Right cardiac atrium (tissue), 5 donors: ENCODE measurements at regions of chr3 and their contacts with region 1.

Region 1: GRCh38 chr3:67377299-67377698 is 277.1 kb downstream of the SUCLG2 start:
- DNase-seq: no peak
- ATAC-seq: no peak
- H3K4me3 ChIP-seq: no peak overlapping the region
- H3K27ac ChIP-seq: no peak overlapping the region
- H3K4me1 ChIP-seq: no peaks in the 10 kb centered on the region
- H3K27me3 ChIP-seq: no peaks in the 10 kb centered on the region

Region 2: GRCh38 chr3:68631810-68632545 is 1254.7 kb after region 1 on chr3:
- intact Hi-C with region 1: loop called in 1 of 4 experiments (anchors 5 kb)
- DNase-seq: no peak
- ATAC-seq: no peak
- H3K4me3 ChIP-seq: no peak overlapping the region
- H3K27ac ChIP-seq: no peak overlapping the region
- H3K4me1 ChIP-seq: no peaks in the 10 kb centered on the region
- H3K27me3 ChIP-seq: no peaks in the 10 kb centered on the region